MCF 10A (cell line): ENCODE measurements at regions of chr6 and their contacts with region 1.

Region 1: GRCh38 chr6:30821862-30822782 is 62.2 kb upstream of the DDR1 start:
- DNase-seq: peak; percentile 65
- H3K4me3 Mint-ChIP-seq: no peak overlapping the region
- H3K27ac Mint-ChIP-seq: peak overlapping the region; percentile 63
- H3K4me1 Mint-ChIP-seq: peaks cover 50% of the 10 kb centered on the region
- H3K27me3 Mint-ChIP-seq: no peaks in the 10 kb centered on the region
- CTCF ChIP-seq: peak; percentile 54

Region 2: GRCh38 chr6:30344868-30345671 is 477.1 kb before region 1 on chr6 and contains the start of gene RPP21:
- CTCF ChIA-PET with region 1: no interaction called
- POLR2A ChIA-PET with region 1: no interaction called
- intact Hi-C with region 1: no loop called
- DNase-seq: peak; percentile 76
- H3K4me3 Mint-ChIP-seq: peak within 1 kb of the TSS; percentile 78
- H3K27ac Mint-ChIP-seq: peak within 1 kb of the TSS; percentile 39
- H3K4me1 Mint-ChIP-seq: peaks cover 7% of the 10 kb centered on the region
- H3K27me3 Mint-ChIP-seq: no peaks in the 10 kb centered on the region
- CTCF ChIP-seq: no peak
- total RNA-seq, gene RPP21: 63.0 and 74.1 TPM in 2 replicates

Region 3: DNA sequence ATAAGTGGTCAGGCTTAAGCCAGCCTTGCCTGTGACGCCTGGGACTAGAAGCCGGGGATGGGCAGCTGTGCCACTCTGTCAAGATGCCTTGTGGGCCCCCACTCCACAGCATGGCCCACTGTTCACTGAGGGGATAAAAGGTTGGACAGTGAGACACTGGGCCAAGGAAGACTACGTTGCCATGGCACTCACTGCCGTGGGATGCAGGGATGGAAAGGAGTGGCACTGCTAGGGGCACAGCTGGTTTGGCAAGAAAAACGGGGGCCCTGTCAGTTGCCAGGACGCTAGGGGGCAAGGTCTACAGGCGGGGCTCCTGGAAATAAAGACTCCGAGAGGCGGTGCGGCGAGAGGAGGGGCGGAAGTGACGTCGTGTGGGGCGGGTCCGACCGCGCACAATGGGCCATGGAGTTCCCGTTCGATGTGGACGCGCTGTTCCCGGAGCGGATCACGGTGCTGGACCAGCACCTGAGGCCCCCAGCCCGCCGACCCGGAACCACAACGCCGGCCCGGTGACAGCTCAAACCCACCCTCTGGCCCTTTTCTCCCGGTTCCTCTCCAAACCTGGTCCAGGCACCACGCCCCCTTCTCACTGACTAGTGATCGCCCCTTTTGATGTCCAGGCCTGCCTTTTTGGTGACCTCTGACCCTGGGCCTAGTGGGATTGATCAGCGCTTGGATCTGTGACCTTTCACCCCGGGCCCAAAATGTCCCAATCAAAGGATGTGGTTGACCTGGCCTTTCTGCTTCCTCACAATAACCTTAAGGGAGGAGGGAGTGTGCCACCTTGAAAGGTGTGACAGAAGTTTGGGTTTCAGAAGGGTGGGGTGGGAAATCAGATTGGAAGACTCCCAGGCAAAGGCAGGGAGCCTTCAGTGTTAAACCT is 195.4 kb before region 1 on chr6 and contains the start of gene ATAT1:
- CTCF ChIA-PET with region 1: no interaction called
- POLR2A ChIA-PET with region 1: no interaction called
- intact Hi-C with region 1: no loop called
- DNase-seq: peak; percentile 41
- H3K4me3 Mint-ChIP-seq: peak within 1 kb of the TSS; percentile 82
- H3K27ac Mint-ChIP-seq: peak within 1 kb of the TSS; percentile 93
- H3K4me1 Mint-ChIP-seq: peaks cover 7% of the 10 kb centered on the region
- H3K27me3 Mint-ChIP-seq: no peaks in the 10 kb centered on the region
- CTCF ChIP-seq: peak; percentile 20
- total RNA-seq, gene ATAT1: 6.4 and 8.6 TPM in 2 replicates

Region 4: DNA sequence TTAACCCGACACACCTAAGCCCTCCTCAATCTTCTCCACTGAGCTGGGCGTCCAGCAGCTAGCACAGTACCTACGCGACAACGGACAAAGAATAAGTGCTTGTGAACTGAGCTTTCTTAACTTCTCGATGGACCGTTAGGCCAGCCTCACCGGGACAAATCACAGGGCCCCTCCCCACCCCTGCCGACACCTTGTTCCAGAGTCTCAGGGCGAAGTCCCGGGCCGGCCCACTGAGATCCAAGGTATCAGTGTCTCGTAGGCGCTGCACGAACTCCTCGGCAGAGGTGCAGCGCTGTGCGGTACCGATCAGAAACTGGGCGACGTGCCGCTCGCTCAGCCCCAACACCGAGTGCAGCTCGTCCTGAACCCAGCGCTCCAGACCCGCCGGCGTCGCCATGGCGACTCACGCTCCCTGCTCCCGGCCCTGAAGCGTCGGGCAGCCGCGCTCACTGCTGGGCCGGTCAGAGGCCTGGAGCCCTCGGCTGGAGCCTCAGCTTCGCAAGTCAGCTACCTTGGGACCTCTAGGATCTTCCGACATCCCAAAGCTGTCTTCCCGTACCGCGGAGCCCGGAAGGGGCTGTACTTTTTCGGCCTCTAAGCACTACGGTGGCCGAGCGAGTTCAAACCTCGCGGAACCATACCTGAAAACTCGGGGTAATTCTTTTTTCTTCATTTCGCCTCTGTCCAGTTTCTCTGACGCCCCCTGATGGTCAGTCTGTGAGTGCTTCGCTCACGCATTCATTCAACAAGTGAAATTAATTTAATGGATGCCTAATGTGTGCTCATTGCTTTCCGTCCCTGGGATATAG is 149.5 kb before region 1 on chr6 and contains the start of gene DHX16:
- CTCF ChIA-PET with region 1: interaction called, 10 read pairs
- POLR2A ChIA-PET with region 1: no interaction called
- intact Hi-C with region 1: no loop called
- DNase-seq: peak; percentile 99
- H3K4me3 Mint-ChIP-seq: peak within 1 kb of the TSS; percentile 83
- H3K27ac Mint-ChIP-seq: peak within 1 kb of the TSS; percentile 52
- H3K4me1 Mint-ChIP-seq: peaks cover 12% of the 10 kb centered on the region
- H3K27me3 Mint-ChIP-seq: no peaks in the 10 kb centered on the region
- CTCF ChIP-seq: peak; percentile 71
- total RNA-seq, gene DHX16: 41.3 and 49.8 TPM in 2 replicates

Region 5: GRCh38 chr6:30717042-30717844 is 104.9 kb before region 1 on chr6 and contains the start of gene MDC1:
- CTCF ChIA-PET with region 1: interaction called, 26 read pairs
- POLR2A ChIA-PET with region 1: interaction called, 6 read pairs
- intact Hi-C with region 1: no loop called
- DNase-seq: peak; percentile 100
- H3K4me3 Mint-ChIP-seq: peak within 1 kb of the TSS; percentile 88
- H3K27ac Mint-ChIP-seq: peak within 1 kb of the TSS; percentile 94
- H3K4me1 Mint-ChIP-seq: peaks cover 38% of the 10 kb centered on the region
- H3K27me3 Mint-ChIP-seq: no peaks in the 10 kb centered on the region
- CTCF ChIP-seq: no peak
- total RNA-seq, gene MDC1: 50.6 and 54.5 TPM in 2 replicates

Region 6: DNA sequence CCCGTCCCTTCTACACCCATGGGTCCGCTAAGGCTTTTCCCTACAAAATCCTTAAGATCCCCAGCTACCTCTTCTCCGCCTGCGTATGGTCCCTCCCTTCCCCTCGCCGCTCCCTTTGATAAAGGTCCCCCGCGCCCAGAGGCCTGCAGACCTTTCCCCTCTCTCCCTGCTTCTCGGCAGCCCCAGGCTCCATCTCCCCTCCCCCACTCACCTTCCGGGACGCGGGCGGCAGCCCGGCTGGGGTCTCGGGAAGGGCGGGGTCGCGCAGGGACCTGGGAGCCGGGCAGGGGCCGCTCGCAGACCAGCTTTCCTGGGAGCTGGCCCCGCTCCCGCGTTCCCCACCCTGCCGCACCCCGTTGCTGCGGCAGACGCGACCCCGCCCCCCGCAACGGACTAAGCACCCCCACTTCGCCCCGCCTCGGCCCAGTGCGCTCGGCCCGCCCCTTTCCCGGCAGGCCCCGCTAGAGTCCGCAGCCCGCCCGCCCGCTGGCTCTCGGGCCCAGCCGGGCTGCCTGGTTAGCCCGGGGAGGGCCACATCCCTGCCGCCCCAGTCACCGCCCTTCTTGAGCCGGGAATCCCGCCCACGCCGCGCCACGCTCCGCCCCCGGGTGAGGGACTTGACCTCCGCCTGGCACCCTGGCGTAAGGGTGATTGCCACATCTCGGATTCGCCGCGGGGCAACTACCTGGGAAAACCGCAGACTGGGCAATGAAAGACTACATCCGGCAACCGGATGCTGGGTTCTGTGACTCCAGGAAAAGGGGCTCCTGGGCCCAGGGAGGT is 79.6 kb before region 1 on chr6 and contains the start of gene FLOT1:
- CTCF ChIA-PET with region 1: interaction called, 79 read pairs
- POLR2A ChIA-PET with region 1: interaction called, 159 read pairs
- intact Hi-C with region 1: loop called (anchors 1 kb)
- DNase-seq: peak; percentile 99
- H3K4me3 Mint-ChIP-seq: peak within 1 kb of the TSS; percentile 91
- H3K27ac Mint-ChIP-seq: peak within 1 kb of the TSS; percentile 90
- H3K4me1 Mint-ChIP-seq: peaks cover 38% of the 10 kb centered on the region
- H3K27me3 Mint-ChIP-seq: no peaks in the 10 kb centered on the region
- CTCF ChIP-seq: no peak
- total RNA-seq, gene FLOT1: 61.8 and 73.7 TPM in 2 replicates

Region 7: DNA sequence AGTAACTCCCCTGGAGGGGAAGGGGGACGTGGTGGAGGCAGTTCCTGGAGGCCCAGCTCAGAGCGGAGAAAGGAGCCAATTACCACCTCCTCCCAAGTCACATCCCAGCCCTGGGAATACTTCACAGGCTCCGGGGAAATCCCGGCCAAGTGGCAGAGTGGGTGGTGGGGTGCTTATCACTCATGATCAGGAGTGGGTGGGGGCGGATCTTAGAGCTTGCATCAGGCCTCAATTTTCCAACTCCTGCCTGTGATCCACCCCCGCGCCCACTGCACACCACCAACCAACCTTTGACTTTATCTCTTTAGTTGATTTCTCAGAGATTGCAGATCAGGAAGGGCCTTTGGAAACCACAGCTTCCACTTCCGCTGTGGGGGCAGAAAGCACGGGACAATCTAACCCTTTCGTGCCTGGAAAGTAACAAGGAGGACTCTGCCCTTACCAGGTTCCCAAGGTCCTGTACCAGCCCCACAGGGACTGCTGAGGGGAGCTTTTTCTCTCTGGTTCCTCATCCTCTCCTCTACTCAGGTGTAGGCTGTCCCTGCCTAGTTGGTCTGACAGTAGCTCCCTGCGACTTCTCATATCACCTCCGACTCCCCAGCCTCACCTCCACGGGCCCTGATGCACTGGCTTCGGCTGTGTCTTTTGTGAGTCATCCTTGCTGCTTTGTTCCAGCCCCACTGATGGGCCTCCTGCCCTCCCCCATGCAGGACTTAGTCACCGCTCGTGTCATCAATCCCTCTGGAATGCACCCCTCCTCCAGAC is 52.9 kb before region 1 on chr6:
- CTCF ChIA-PET with region 1: interaction called, 14 read pairs
- POLR2A ChIA-PET with region 1: interaction called, 48 read pairs
- intact Hi-C with region 1: no loop called
- DNase-seq: peak; percentile 94
- H3K4me3 Mint-ChIP-seq: peak overlapping the region; percentile 48
- H3K27ac Mint-ChIP-seq: peak overlapping the region; percentile 76
- H3K4me1 Mint-ChIP-seq: peaks cover 36% of the 10 kb centered on the region
- H3K27me3 Mint-ChIP-seq: no peaks in the 10 kb centered on the region
- CTCF ChIP-seq: no peak

Region 8: DNA sequence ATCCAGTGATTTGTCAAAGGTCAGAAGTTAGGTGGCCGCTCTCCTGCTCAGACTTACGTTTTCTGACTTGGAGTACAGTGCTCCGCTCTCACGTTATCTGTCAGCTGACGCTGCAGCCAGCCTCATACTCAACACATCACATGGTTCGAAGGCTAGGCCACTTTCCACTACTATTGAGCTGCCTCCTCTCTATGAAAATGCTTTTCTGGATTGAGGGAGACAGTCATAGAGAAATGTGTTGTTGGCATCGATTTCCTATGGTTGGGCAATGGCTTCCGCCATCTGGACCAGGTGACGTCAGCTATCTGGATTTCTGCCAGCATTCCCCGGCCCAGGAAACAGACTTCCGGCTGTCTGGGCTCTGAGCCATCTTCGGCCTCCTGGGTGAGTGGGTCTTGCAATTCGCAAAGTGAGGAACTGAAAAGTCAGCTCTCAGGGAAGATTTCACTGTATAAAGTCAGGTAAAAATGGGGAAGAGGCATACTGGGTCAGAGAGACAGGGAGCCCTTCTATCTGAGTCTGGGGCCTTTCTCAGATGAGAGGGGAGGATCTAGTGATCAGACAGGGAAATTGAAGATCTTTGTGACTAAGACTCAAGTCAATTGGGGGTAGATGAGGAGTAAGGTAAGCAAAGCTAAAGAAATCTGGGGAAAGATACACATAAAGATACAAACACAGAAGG is 40.2 kb before region 1 on chr6:
- CTCF ChIA-PET with region 1: interaction called, 37 read pairs
- POLR2A ChIA-PET with region 1: interaction called, 54 read pairs
- intact Hi-C with region 1: loop called (anchors 1 kb)
- DNase-seq: peak; percentile 98
- H3K4me3 Mint-ChIP-seq: peak overlapping the region; percentile 42
- H3K27ac Mint-ChIP-seq: peak overlapping the region; percentile 91
- H3K4me1 Mint-ChIP-seq: peaks cover 57% of the 10 kb centered on the region
- H3K27me3 Mint-ChIP-seq: no peaks in the 10 kb centered on the region
- CTCF ChIP-seq: no peak

Region 9: GRCh38 chr6:31068669-31069340 is 246.7 kb after region 1 on chr6:
- CTCF ChIA-PET with region 1: interaction called, 14 read pairs
- POLR2A ChIA-PET with region 1: interaction called, 5 read pairs
- intact Hi-C with region 1: no loop called
- DNase-seq: peak; percentile 82
- H3K4me3 Mint-ChIP-seq: no peak overlapping the region
- H3K27ac Mint-ChIP-seq: no peak overlapping the region
- H3K4me1 Mint-ChIP-seq: peaks cover 5% of the 10 kb centered on the region
- H3K27me3 Mint-ChIP-seq: no peaks in the 10 kb centered on the region
- CTCF ChIP-seq: peak; percentile 81